HEK293T (cell line): ENCODE measurements at regions of chr4 and their contacts with region 1.

Region 1: DNA sequence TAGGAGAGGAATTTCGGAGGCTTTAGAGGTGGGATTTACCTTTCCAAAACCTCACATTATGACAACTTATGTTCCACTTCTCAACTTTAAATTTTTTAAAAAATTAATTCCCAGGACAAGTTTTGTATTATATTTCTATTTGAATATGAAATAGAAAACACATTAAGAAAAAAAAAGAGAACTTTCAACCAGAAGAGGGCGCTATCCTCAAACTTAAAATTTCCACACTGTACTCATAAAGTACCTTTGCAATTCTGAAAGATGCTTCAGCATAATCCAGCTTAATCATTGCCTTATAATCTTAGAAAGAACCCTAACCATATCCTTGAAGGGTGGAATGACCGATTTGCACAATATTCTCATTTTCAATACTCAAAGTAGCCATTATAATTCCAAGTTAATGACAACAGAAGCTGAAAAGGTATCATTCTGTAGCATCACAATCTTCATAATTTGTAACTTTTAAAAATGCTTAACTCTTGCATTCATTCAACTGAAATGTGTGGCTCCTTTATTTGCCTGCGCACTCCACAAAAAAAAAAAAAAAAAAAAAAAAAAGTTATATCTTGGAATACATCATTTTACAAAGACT is 158.0 kb downstream of the KCNIP4 start:
- DNase-seq: no peak

Region 2: DNA sequence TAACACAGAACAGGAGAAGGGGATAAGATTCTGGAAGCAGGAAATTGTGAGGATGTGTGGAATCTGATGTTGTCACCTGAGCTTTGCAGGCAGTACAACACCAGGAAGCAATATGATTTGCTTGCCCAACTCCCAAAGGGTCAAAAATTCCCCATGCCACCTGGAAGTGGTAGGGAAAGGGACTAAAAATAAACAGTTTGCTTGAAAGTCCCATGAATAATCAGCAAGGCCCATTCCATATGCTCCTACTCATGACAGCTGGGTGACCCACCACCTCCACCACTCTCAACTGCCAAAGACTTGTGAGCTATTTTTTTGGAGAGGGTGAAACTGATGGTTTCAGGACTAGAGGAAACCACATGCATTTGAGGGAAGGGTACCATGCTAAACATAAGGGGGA is 10.4 kb before region 1 on chr4:
- CTCF ChIA-PET with region 1: no interaction called
- POLR2A ChIA-PET with region 1: no interaction called
- DNase-seq: no peak

Region 3: GRCh38 chr4:22389240-22389870 is 598.8 kb after region 1 on chr4:
- CTCF ChIA-PET with region 1: interaction called, 31 read pairs
- POLR2A ChIA-PET with region 1: no interaction called
- DNase-seq: peak; percentile 30